ENCODE measurements at regions of chr2 and their contacts with region 1.

Region 1: GRCh38 chr2:172465417-172466334 is 38.3 kb downstream of the ITGA6 start:
- DNase-seq: peak; percentile 79
- H3K4me3 ChIP-seq: no peak overlapping the region
- H3K27ac ChIP-seq: no peak overlapping the region
- H3K4me1 ChIP-seq: peaks cover 27% of the 10 kb centered on the region
- H3K27me3 ChIP-seq: no peaks in the 10 kb centered on the region
- CTCF ChIP-seq: peak; percentile 71 to 75
- POLR2A ChIP-seq: no peak

Region 2: GRCh38 chr2:171574149-171574795 is 891.4 kb before region 1 on chr2:
- CTCF ChIA-PET with region 1: no interaction called
- POLR2A ChIA-PET with region 1: no interaction called
- dilution Hi-C with region 1: no loop called
- intact Hi-C with region 1: loop called (anchors 1 kb)
- DNase-seq: peak; percentile 84
- H3K4me3 ChIP-seq: no peak overlapping the region
- H3K27ac ChIP-seq: no peak overlapping the region
- H3K4me1 ChIP-seq: no peaks in the 10 kb centered on the region
- H3K27me3 ChIP-seq: peaks cover 2 to 3% of the 10 kb centered on the region in 2 experiments
- CTCF ChIP-seq: peak; percentile 91 to 94
- POLR2A ChIP-seq: no peak

Region 3: GRCh38 chr2:172200495-172201085 is 265.1 kb before region 1 on chr2:
- CTCF ChIA-PET with region 1: interaction called, 12 read pairs
- POLR2A ChIA-PET with region 1: no interaction called
- dilution Hi-C with region 1: no loop called
- intact Hi-C with region 1: loop called (anchors 1 kb)
- DNase-seq: peak; percentile 53
- H3K4me3 ChIP-seq: no peak overlapping the region
- H3K27ac ChIP-seq: no peak overlapping the region
- H3K4me1 ChIP-seq: no peaks in the 10 kb centered on the region
- H3K27me3 ChIP-seq: no peaks in the 10 kb centered on the region
- CTCF ChIP-seq: peak; percentile 42 to 47
- POLR2A ChIP-seq: no peak

Region 4: GRCh38 chr2:172246649-172247048 is 219.0 kb before region 1 on chr2:
- CTCF ChIA-PET with region 1: interaction called, 30 read pairs
- POLR2A ChIA-PET with region 1: no interaction called
- dilution Hi-C with region 1: no loop called
- intact Hi-C with region 1: no loop called
- DNase-seq: peak; percentile 53
- H3K4me3 ChIP-seq: no peak overlapping the region
- H3K27ac ChIP-seq: peak overlapping the region; percentile 5
- H3K4me1 ChIP-seq: peaks cover 67% of the 10 kb centered on the region
- H3K27me3 ChIP-seq: no peaks in the 10 kb centered on the region
- CTCF ChIP-seq: no peak
- POLR2A ChIP-seq: no peak

Region 5: DNA sequence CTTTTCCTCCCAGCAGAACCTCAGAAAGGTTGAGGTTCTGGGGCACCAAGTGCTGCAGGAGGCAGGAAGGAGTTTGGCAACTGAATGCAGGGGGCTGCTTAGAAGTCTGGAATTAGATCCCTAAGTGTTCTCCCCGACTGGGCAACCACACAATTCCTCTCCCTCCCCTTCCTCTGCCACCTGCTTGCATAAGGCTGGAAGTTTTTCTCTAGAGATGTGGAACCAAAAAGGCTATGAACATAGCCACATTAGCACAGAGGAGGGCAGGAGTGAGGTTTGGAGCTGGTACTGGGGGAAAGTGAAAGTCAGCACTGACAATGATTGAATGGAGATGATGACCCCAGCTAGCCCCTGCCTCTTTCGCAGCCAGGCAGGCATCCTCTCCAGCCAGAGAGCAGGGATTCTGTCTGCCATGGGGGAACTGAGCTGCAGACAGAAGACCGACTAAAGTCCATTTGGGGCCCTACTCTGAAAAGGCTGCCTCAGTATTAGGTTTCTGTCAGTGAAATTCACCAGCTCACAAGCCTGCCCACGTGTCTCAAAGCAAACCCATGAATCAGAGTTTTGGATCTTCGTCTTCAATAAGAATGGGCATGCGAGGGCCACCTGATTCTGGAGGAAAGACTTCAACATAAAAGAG is 126.2 kb before region 1 on chr2:
- CTCF ChIA-PET with region 1: interaction called, 14 read pairs
- POLR2A ChIA-PET with region 1: no interaction called
- dilution Hi-C with region 1: no loop called
- intact Hi-C with region 1: no loop called
- DNase-seq: peak; percentile 29
- H3K4me3 ChIP-seq: no peak overlapping the region
- H3K27ac ChIP-seq: no peak overlapping the region
- H3K4me1 ChIP-seq: peaks cover 2% of the 10 kb centered on the region
- H3K27me3 ChIP-seq: no peaks in the 10 kb centered on the region
- CTCF ChIP-seq: no peak
- POLR2A ChIP-seq: no peak

Region 6: GRCh38 chr2:172442072-172442895 is 23.4 kb before region 1 on chr2:
- CTCF ChIA-PET with region 1: interaction called, 80 read pairs
- POLR2A ChIA-PET with region 1: no interaction called
- dilution Hi-C with region 1: no loop called
- intact Hi-C with region 1: no loop called
- DNase-seq: peak; percentile 69
- H3K4me3 ChIP-seq: no peak overlapping the region
- H3K27ac ChIP-seq: peak overlapping the region; percentile 60
- H3K4me1 ChIP-seq: peaks cover 65% of the 10 kb centered on the region
- H3K27me3 ChIP-seq: no peaks in the 10 kb centered on the region
- CTCF ChIP-seq: no peak
- POLR2A ChIP-seq: no peak